Activated T-helper 2 cell treated with anti-CD3 and anti-CD28 coated beads, Interferon-gamma antibody, Interleukin-2, Interleukin-4, amounts not matched to agents 10 μg/mL and 5 μg/mL and 100 μg/mL, durations not matched to agents 14 hours and 24 hours and 36 hours (primary cell): ENCODE measurements at regions of chr4 and their contacts with region 1.

Region 1: DNA sequence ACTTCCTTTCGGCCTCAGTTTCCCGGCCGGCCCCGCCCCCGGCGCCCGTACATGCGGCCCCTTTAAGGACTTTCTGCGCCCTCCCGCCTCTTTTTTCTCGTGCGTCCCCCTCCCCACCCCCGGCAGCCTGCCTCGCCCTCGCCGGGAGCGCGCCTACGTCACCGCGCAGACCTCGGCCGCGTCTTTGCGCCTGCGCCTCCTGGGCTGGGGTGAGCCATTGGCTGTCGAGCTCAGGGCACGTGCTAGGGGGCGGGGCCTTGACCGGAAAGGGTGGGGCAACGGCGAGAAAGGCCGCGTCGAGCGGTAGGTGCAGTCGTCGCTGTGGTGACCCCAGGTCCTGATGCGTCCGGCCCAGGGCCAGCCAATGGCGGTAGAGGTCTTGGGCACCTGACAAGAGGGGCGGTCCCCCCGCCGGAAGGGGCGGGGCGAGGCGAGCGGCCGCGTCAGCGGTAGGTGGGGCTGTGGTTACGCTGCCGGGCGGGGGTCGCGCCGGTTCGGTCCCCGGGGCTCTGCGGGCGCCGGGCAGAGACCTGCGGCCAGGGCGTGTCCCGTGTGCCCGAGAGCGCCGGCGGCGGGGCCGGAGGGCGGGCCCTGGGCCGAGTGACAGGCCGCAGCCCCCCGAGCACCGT is at the start of gene UVSSA:
- DNase-seq: peak; percentile 100
- H3K4me3 Mint-ChIP-seq: peak within 1 kb of the TSS; percentile 91
- H3K27ac Mint-ChIP-seq: peak within 1 kb of the TSS; percentile 91
- H3K4me1 Mint-ChIP-seq: peaks cover 33% of the 10 kb centered on the region
- H3K27me3 Mint-ChIP-seq: no peaks in the 10 kb centered on the region
- total RNA-seq, gene UVSSA: 23.3 and 23.5 TPM in 2 replicates

Region 2: GRCh38 chr4:1011022-1011694 is 335.7 kb before region 1 on chr4 and contains the start of gene FGFRL1:
- intact Hi-C with region 1: loop called (anchors 1 kb)
- DNase-seq: peak; percentile 89
- H3K4me3 Mint-ChIP-seq: peak within 1 kb of the TSS; percentile 82
- H3K27ac Mint-ChIP-seq: peak within 1 kb of the TSS; percentile 89
- H3K4me1 Mint-ChIP-seq: peaks cover 9% of the 10 kb centered on the region
- H3K27me3 Mint-ChIP-seq: peaks cover 25% of the 10 kb centered on the region
- total RNA-seq, gene FGFRL1: 17.5 TPM in 2 replicates

Region 3: GRCh38 chr4:1200425-1201035 is 146.4 kb before region 1 on chr4:
- intact Hi-C with region 1: loop called (anchors 2 kb)
- DNase-seq: no peak
- H3K4me3 Mint-ChIP-seq: peak overlapping the region; percentile 65
- H3K27ac Mint-ChIP-seq: peak overlapping the region; percentile 98
- H3K4me1 Mint-ChIP-seq: peaks cover 45% of the 10 kb centered on the region
- H3K27me3 Mint-ChIP-seq: no peaks in the 10 kb centered on the region

Region 4: GRCh38 chr4:1289207-1290164 is 57.4 kb before region 1 on chr4 and contains the start of gene MAEA:
- intact Hi-C with region 1: loop called (anchors 1 kb)
- DNase-seq: peak; percentile 98
- H3K4me3 Mint-ChIP-seq: peak within 1 kb of the TSS; percentile 97
- H3K27ac Mint-ChIP-seq: peak within 1 kb of the TSS; percentile 90
- H3K4me1 Mint-ChIP-seq: peaks cover 23% of the 10 kb centered on the region
- H3K27me3 Mint-ChIP-seq: no peaks in the 10 kb centered on the region
- total RNA-seq, gene MAEA: 59.2 and 62.8 TPM in 2 replicates

Region 5: DNA sequence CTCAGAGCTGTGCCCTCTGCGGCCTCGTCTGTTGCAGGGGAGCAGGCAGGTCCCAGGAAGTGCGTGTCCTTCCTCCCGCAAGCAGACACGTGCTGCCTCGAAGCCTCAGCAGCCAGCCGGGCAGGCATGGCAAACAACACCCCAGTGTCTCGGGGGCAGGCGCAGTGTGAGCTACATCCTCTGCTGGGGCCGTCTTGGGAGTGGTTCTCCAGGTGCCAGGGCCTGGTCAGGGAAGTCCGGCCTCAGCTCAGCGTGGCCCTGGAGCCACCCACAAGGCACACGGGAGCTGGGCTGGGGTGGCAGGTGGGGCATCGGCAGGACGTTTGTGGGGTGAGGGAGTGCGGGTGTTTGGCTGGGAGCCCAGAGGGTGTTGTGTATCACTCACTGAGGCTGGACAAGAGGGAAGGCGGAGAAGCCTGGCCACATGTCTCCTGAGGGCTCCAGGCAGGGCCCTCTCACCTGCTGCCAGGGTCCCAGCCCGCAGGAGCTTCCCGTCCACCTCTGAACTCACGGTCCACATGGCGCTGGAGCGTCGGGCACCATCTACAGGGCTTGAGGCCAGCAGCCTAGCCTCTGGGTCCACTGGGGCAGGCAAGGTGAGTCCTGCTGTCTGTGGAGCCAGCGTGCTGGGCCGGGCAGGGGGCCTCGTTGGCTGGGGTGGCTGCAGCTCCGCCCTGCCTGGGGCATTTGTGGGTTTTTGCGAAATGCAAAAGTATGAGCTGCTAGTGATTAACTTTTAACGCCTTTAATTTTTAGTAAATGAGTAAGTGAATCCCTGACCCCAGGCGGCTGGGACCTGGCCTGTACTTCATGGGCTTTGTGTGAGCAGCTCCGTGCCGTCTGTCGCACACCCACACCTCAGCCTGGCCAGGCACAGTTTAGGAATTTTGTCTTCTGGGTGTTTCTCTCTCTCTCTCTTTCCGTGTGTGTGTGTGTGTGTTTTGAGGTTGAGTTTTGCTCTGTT is 17.2 kb before region 1 on chr4:
- intact Hi-C with region 1: loop called (anchors 1 kb)
- DNase-seq: no peak
- H3K4me3 Mint-ChIP-seq: peak overlapping the region; percentile 18
- H3K27ac Mint-ChIP-seq: peak overlapping the region; percentile 66
- H3K4me1 Mint-ChIP-seq: peaks cover 27% of the 10 kb centered on the region
- H3K27me3 Mint-ChIP-seq: no peaks in the 10 kb centered on the region

Region 6: GRCh38 chr4:1712216-1713002 is 365.5 kb after region 1 on chr4 and contains the start of gene SLBP:
- intact Hi-C with region 1: loop called (anchors 5 kb)
- DNase-seq: peak; percentile 99
- H3K4me3 Mint-ChIP-seq: peak within 1 kb of the TSS; percentile 99
- H3K27ac Mint-ChIP-seq: peak within 1 kb of the TSS; percentile 97
- H3K4me1 Mint-ChIP-seq: peaks cover 47% of the 10 kb centered on the region
- H3K27me3 Mint-ChIP-seq: no peaks in the 10 kb centered on the region
- total RNA-seq, gene SLBP: 125 and 127 TPM in 2 replicates